Activated CD4-positive, alpha-beta T cell treated with anti-CD3 and anti-CD28 coated beads, Interleukin-2, amount 10 ng/mL, durations not matched to agents 24 days and 14 days (primary cell): ENCODE measurements at regions of chr7 and their contacts with region 1.

Region 1: DNA sequence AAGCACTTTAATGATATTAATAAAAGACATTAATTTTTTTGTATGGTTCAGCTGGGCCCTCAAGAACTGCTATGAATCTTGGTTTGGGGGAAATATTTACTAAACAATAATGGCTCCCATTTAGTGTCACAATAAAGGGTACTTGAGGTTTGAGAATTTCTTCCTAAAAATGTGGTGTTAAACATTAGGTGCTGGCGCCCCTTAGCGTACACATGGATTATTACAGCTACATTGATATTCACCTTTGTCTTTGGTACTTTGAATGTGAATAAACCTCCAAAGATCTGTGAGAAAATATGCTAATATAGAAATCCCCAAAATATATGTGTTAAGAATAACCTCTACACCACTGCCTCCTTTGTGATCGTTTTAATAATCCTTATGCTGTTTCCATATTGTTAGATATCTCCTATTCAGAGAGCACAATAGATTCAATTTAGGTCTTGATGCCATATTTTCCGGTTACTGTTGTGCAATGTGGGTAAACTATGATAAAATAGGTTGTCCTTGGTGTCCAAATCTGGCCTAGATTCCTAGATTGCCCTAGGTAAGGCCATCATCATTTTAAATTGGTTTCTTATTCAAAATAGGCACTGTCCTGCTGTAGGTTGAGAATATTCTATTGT is 161.8 kb upstream of the CACNA2D1 start:
- DNase-seq: no peak
- H3K4me3 Mint-ChIP-seq: no peak overlapping the region
- H3K27ac Mint-ChIP-seq: no peak overlapping the region
- H3K4me1 Mint-ChIP-seq: no peaks in the 10 kb centered on the region
- H3K27me3 Mint-ChIP-seq: no peaks in the 10 kb centered on the region

Region 2: DNA sequence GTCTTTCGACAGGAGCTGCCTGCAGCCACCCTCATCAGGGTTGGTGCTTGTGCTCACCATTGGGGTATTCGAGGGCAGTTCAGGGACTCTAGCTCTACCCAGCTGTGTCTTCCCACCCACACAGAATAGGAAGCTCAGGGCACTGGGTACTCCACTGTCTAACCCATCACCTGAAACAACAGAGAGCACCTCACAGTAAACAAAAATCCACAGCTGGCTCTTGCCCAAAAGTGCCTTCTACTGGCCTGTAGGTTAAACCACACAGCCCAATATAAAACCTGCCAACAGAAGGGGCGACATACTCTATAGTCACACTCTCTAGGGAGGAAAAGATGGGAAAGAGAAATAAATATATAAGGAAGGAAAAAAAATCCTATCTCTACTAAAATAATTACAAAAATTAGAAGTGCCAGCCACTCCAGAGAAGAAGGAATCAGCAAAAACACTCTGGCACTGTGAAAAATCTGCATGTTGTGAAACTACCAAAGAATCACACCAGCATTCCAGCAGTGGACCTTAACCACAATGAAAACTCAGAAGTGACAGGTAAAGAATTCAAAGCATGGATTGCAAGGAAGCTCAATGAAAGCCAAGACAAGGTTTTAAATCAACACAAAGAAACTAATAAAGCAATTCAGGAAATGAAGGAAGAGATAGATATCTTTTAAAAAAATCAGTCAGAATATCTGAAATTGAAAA is 945.5 kb before region 1 on chr7:
- intact Hi-C with region 1: no loop called
- DNase-seq: no peak
- H3K4me3 Mint-ChIP-seq: no peak overlapping the region
- H3K27ac Mint-ChIP-seq: no peak overlapping the region
- H3K4me1 Mint-ChIP-seq: no peaks in the 10 kb centered on the region
- H3K27me3 Mint-ChIP-seq: no peaks in the 10 kb centered on the region

Region 3: GRCh38 chr7:82044497-82045080 is 560.8 kb before region 1 on chr7:
- intact Hi-C with region 1: loop called (anchors 10 kb)
- DNase-seq: peak; percentile 61
- H3K4me3 Mint-ChIP-seq: no peak overlapping the region
- H3K27ac Mint-ChIP-seq: no peak overlapping the region
- H3K4me1 Mint-ChIP-seq: no peaks in the 10 kb centered on the region
- H3K27me3 Mint-ChIP-seq: no peaks in the 10 kb centered on the region